Sigmoid colon (tissue), 7 donors: ENCODE measurements at regions of chr20 and their contacts with region 1.

Region 1: DNA sequence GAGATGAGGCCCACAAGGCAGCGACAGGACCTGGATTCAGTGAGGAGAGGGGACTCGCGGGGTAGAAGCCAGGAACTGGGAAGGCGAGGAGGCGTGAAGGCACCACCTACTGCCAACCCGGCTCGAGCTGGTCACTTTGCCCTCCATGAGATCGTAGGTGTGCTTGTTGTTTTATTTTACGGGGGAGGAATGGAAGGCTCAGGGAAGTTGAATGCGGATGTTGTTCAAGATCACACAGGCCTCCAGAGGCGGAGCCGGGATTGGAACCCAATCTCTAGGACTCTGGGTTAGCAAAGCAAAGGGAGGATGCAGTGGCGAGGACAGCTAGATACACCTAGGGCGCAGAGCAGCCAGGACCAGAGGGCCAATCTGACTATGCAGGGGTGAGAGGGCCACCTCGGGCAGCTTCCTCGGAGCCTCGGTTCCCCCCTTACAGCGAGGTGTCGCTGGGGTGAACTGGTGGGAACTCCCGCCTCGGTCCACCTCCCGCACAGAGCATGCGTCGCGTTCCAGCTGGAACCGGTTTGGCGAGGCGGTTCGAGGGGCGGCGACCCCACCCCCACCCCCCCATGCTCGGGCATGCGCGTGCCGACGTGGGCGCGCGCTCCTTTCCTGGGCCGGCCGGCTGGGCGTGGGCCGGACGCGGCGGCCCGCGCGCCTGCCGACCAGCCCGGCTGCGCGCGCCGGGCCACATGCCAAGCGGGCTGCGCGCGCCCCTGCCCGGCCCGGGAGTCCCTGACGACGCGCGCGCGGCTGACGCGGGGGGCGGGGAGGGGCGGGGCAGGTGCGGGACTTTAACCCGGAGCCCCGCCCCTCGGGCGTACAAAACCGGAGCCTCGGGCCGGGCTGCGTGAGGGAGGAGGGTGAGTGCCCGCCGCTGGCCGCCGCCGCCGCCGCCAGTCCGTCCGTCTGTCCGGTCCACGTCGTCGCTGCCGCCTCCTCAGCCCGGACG is 80.4 kb upstream of the MYL9 start:
- DNase-seq: peak; percentile 96
- H3K4me3 ChIP-seq: peak overlapping the region; percentile 65 to 88 (median 81)
- H3K27ac ChIP-seq: peak overlapping the region; percentile 93 to 99 (median 98)
- H3K4me1 ChIP-seq: peaks cover 0 to 43% (median 38%) of the 10 kb centered on the region in 4 donors
- H3K27me3 ChIP-seq: no peaks in the 10 kb centered on the region
- CTCF ChIP-seq: no peak
- EP300 ChIP-seq: peak in 1 of 4 donors; percentile 23
- POLR2A ChIP-seq: peak; percentile 23 to 28

Region 2: GRCh38 chr20:36585463-36586108 is 124.7 kb after region 1 on chr20:
- intact Hi-C with region 1: no loop called
- DNase-seq: no peak
- H3K4me3 ChIP-seq: no peak overlapping the region
- H3K27ac ChIP-seq: no peak overlapping the region
- H3K4me1 ChIP-seq: no peaks in the 10 kb centered on the region
- H3K27me3 ChIP-seq: no peaks in the 10 kb centered on the region
- CTCF ChIP-seq: no peak
- EP300 ChIP-seq: no peak
- POLR2A ChIP-seq: no peak

Region 3: DNA sequence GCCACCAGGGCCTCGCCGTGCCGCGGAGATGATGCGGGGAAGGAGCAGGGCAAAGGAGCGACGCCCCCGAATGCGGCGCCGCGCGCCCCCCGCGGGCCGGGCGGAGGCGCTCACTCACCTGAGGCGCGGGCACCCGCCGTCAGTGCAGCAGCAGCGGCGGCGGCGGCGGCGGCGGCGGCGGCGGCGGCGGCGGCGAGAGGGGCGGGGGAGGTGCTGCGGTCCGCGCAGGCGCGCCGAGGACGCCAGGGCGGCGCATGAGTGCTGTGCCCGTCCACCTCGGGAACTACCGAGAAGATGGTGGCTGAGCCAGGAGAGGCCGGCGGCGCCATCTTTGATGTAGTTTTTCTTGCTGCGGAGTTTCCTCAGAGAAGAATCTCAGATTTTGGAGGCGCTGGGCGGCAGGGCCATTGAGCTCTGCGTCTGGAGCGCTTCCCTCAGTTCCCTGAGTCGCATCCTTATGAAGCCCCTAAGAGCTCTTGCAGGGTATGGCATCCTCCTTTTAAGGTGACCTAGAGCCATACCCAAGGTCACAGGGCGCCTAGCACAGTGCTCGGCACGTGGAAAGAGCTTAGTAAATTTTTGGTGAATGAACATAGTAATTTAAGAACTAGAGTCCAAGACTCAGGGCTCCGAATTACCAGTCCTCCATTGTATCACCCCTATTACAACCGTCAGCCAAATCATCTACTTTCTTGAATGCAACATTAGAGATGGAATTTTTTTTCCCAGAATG is 285.2 kb after region 1 on chr20 and contains the start of gene NDRG3:
- intact Hi-C with region 1: loop called (anchors 10 kb)
- DNase-seq: peak; percentile 98
- H3K4me3 ChIP-seq: peak within 1 kb of the TSS; percentile 83 to 99 (median 94)
- H3K27ac ChIP-seq: peak within 1 kb of the TSS; percentile 71 to 84 (median 83)
- H3K4me1 ChIP-seq: peaks cover 0 to 24% (median 19%) of the 10 kb centered on the region in 4 donors
- H3K27me3 ChIP-seq: no peaks in the 10 kb centered on the region
- CTCF ChIP-seq: no peak
- EP300 ChIP-seq: no peak
- POLR2A ChIP-seq: no peak
- total RNA-seq, gene NDRG3: 28.5 to 38.9 (median 31.5) TPM

Region 4: DNA sequence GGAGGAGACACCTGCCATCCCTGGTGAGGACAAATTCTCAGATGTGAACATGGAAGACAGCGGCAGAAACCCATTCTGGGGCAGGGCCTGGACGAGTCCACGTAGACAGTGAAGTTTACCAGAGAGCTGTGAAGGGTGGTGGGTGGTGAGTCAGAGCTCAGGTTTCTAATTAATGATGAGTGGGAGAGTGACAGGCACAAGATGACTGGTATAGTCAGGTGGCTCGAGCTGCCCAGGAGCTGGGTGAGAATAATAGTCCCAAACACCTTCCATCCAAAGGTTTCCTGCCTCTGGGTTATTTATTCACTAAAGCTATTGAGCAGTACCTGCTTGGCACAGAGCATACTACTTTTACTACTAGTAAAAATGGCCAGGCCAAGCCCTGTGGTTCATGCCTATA is 421.0 kb after region 1 on chr20:
- intact Hi-C with region 1: no loop called
- DNase-seq: no peak
- H3K4me3 ChIP-seq: no peak overlapping the region
- H3K27ac ChIP-seq: no peak overlapping the region
- H3K4me1 ChIP-seq: peaks cover 0 to 4% (median 3%) of the 10 kb centered on the region in 4 donors
- H3K27me3 ChIP-seq: no peaks in the 10 kb centered on the region
- CTCF ChIP-seq: no peak
- EP300 ChIP-seq: no peak
- POLR2A ChIP-seq: no peak